AG04449 (cell line): ENCODE measurements at regions of chr12 and their contacts with region 1.

Region 1: DNA sequence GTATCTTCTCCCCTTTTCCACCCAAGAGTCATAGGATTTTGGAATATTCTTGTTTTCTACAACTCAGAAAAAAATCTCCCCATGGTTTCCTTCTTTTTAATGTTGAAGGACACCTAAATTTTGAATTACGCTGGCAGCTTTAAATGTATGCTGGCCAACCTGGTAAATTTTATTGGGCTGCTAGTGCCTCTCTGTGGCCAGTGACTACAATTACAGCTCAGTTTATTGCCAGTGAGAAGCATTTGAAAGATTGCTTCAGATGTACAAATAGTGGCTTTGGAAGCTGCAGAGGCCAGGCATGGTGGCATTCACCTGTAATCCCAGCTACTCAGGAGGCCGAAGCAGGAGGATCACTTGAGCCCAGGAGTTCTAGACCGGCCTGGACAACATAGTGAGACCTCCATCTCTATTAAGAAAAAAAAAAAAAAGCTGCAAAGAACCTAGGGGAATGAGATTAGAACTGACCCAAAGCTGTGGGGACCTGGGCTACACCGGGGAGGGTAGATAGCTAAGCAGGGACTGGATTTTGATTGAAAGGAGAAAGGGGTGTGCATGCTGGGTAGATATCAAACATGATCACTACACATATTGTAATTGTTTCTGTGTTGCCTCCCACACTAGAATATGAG is 7.6 kb upstream of the RAB21 start:
- DNase-seq: peak; percentile 14
- H3K4me3 ChIP-seq: no peak overlapping the region
- CTCF ChIP-seq: peak; percentile 67

Region 2: DNA sequence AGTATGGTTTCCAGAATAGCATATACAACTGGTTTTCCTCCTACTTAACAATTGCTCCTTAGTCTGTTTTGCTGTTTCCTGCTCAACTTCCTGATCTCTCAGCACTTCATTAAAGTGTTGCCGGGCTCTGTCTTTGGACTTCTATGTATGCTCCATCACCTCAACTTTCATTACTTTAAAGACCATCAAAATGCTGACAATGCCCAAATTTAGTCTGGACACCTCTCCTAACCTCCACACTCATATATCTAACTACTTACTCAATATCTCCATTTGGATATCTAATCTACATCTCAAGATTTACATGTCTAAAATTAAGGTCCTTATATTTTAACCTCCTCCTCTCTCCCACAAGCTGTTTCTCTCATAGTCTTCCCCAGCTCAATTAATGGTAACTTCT is 361.9 kb before region 1 on chr12:
- CTCF ChIA-PET with region 1: no interaction called
- POLR2A ChIA-PET with region 1: no interaction called
- DNase-seq: no peak
- H3K4me3 ChIP-seq: no peak overlapping the region
- CTCF ChIP-seq: no peak

Region 3: GRCh38 chr12:71415336-71416231 is 331.5 kb before region 1 on chr12:
- CTCF ChIA-PET with region 1: interaction called, 85 read pairs
- POLR2A ChIA-PET with region 1: no interaction called
- DNase-seq: no peak
- H3K4me3 ChIP-seq: no peak overlapping the region
- CTCF ChIP-seq: peak; percentile 76

Region 4: DNA sequence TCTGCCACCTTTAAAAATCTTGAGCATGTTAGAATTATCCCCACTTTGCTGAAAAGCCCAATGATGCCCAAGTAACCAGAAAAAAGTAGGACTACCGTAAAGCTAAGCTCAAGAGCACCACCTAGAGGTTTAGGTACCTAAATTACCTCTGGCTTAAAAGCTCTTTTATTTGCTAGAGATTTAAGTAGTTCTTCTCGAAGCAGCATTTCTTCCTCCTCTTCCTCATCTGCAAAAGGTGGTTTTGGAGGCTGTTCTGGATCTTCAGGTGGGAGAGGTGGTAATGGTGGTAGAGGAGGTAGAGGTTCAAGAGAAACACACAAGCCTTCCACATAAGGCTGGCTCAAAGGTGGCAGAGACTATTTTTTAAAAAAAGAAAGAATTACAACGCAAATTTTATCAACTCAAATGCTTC is 110.4 kb before region 1 on chr12:
- CTCF ChIA-PET with region 1: interaction called, 95 read pairs
- POLR2A ChIA-PET with region 1: no interaction called
- DNase-seq: no peak
- H3K4me3 ChIP-seq: no peak overlapping the region
- CTCF ChIP-seq: peak; percentile 65

Region 5: GRCh38 chr12:71652656-71653055 is 94.4 kb before region 1 on chr12:
- CTCF ChIA-PET with region 1: interaction called, 37 read pairs
- POLR2A ChIA-PET with region 1: no interaction called
- DNase-seq: no peak
- H3K4me3 ChIP-seq: no peak overlapping the region
- CTCF ChIP-seq: no peak

Region 6: GRCh38 chr12:71685914-71686665 is 61.0 kb before region 1 on chr12 and contains the start of gene TMEM19:
- CTCF ChIA-PET with region 1: interaction called, 23 read pairs
- POLR2A ChIA-PET with region 1: interaction called, 5 read pairs
- DNase-seq: peak; percentile 24
- H3K4me3 ChIP-seq: peak within 1 kb of the TSS; percentile 90
- CTCF ChIP-seq: peak; percentile 31

Region 7: GRCh38 chr12:71708658-71709057 is 38.4 kb before region 1 on chr12:
- CTCF ChIA-PET with region 1: interaction called, 11 read pairs
- POLR2A ChIA-PET with region 1: no interaction called
- DNase-seq: no peak
- H3K4me3 ChIP-seq: no peak overlapping the region
- CTCF ChIP-seq: no peak

Region 8: DNA sequence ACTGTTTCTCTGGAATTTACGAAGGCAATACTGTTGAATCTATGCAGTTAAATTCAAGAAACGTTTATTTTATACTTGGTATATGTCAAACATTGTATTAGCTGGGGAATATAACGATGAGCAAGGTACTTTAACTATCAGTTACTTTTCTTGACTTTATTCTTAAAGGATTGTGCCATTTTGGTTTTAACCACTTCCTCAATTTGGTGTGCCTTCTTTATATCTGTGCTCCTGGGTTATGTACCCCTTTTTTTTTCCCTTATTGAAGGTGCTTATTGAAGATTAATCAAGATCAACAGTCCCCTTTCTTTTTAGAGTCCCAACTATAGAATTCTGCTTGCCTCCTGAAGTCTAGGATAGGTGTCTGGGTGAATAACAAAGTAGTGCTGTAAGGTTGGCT is 13.4 kb after region 1 on chr12:
- CTCF ChIA-PET with region 1: interaction called, 17 read pairs
- POLR2A ChIA-PET with region 1: no interaction called
- DNase-seq: no peak
- H3K4me3 ChIP-seq: no peak overlapping the region
- CTCF ChIP-seq: no peak